Activated naive CD4-positive, alpha-beta T cell treated with anti-CD3 and anti-CD28 coated beads for 36 hours (primary cell): ENCODE measurements at regions of chr4 and their contacts with region 1.

Region 1: GRCh38 chr4:100093091-100093866 is 97.0 kb downstream of the DDIT4L start:
- DNase-seq: peak; percentile 97
- H3K4me3 Mint-ChIP-seq: no peak overlapping the region
- H3K27ac Mint-ChIP-seq: peak overlapping the region; percentile 73
- H3K4me1 Mint-ChIP-seq: peaks cover 62% of the 10 kb centered on the region
- H3K27me3 Mint-ChIP-seq: peaks cover 2% of the 10 kb centered on the region

Region 2: DNA sequence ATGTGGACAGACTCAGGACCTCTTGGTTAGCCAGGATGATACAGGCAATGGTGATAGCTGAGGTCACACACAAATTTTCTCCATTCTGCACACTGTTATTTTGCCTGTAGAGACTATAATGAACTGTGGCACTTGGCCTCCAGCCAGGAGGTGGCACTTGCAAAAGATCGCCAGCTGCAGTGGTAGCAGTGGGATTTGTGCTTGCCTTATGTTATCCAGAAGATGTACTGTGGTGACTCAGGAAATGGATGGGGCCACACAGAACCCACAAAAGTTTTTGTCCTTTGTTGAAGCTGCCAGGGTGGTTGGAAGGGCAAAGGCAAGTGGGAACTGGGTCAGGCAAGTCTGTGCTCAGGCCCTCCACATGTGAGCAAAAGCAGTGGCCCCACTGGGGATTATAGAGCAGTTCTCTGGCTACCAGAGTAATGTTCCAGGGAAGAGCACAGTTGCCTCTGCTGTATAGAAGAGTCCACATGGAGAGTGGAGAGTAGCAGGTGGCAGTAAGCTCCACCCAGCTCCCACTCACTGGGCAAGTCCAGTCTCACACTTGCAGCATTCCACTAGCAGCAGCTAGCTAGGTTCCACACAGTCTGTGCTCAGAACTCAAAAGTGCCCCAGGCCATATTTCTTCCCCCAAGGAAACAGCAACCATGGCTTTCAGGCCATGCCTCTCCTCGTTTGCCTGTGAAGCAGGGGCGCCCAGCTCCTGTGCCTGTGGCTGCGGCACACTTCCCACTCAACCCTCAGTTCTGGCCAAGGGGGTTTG is 588.3 kb before region 1 on chr4:
- CTCF ChIA-PET with region 1: no interaction called
- intact Hi-C with region 1: loop called (anchors 5 kb)
- DNase-seq: no peak
- H3K4me3 Mint-ChIP-seq: no peak overlapping the region
- H3K27ac Mint-ChIP-seq: no peak overlapping the region
- H3K4me1 Mint-ChIP-seq: peaks cover 49% of the 10 kb centered on the region
- H3K27me3 Mint-ChIP-seq: no peaks in the 10 kb centered on the region

Region 3: GRCh38 chr4:100082852-100083251 is 10.4 kb before region 1 on chr4:
- CTCF ChIA-PET with region 1: interaction called, 39 read pairs
- intact Hi-C with region 1: loop called (anchors 1 kb)
- DNase-seq: peak; percentile 35
- H3K4me3 Mint-ChIP-seq: no peak overlapping the region
- H3K27ac Mint-ChIP-seq: peak overlapping the region; percentile 89
- H3K4me1 Mint-ChIP-seq: peaks cover 72% of the 10 kb centered on the region
- H3K27me3 Mint-ChIP-seq: peaks cover 2% of the 10 kb centered on the region

Region 4: GRCh38 chr4:100742045-100742444 is 648.8 kb after region 1 on chr4:
- CTCF ChIA-PET with region 1: interaction called, 8 read pairs
- intact Hi-C with region 1: loop called (anchors 1 kb)
- DNase-seq: no peak
- H3K4me3 Mint-ChIP-seq: no peak overlapping the region
- H3K27ac Mint-ChIP-seq: no peak overlapping the region
- H3K4me1 Mint-ChIP-seq: no peaks in the 10 kb centered on the region
- H3K27me3 Mint-ChIP-seq: no peaks in the 10 kb centered on the region

Region 5: GRCh38 chr4:101169044-101170014 is 1076.0 kb after region 1 on chr4:
- CTCF ChIA-PET with region 1: no interaction called
- intact Hi-C with region 1: loop called (anchors 5 kb)
- DNase-seq: peak; percentile 80
- H3K4me3 Mint-ChIP-seq: no peak overlapping the region
- H3K27ac Mint-ChIP-seq: no peak overlapping the region
- H3K4me1 Mint-ChIP-seq: peaks cover 4% of the 10 kb centered on the region
- H3K27me3 Mint-ChIP-seq: no peaks in the 10 kb centered on the region

Region 6: GRCh38 chr4:101527188-101527587 is 1433.9 kb after region 1 on chr4:
- CTCF ChIA-PET with region 1: no interaction called
- intact Hi-C with region 1: loop called (anchors 2 kb)
- DNase-seq: peak; percentile 88
- H3K4me3 Mint-ChIP-seq: no peak overlapping the region
- H3K27ac Mint-ChIP-seq: no peak overlapping the region
- H3K4me1 Mint-ChIP-seq: peaks cover 15% of the 10 kb centered on the region
- H3K27me3 Mint-ChIP-seq: peaks cover 45% of the 10 kb centered on the region

Region 7: GRCh38 chr4:102007959-102008425 is 1914.7 kb after region 1 on chr4:
- CTCF ChIA-PET with region 1: no interaction called
- intact Hi-C with region 1: loop called (anchors 5 kb)
- DNase-seq: peak; percentile 26
- H3K4me3 Mint-ChIP-seq: no peak overlapping the region
- H3K27ac Mint-ChIP-seq: no peak overlapping the region
- H3K4me1 Mint-ChIP-seq: peaks cover 7% of the 10 kb centered on the region
- H3K27me3 Mint-ChIP-seq: no peaks in the 10 kb centered on the region